ENCODE measurements at regions of chr2 and their contacts with region 1.

Region 1: DNA sequence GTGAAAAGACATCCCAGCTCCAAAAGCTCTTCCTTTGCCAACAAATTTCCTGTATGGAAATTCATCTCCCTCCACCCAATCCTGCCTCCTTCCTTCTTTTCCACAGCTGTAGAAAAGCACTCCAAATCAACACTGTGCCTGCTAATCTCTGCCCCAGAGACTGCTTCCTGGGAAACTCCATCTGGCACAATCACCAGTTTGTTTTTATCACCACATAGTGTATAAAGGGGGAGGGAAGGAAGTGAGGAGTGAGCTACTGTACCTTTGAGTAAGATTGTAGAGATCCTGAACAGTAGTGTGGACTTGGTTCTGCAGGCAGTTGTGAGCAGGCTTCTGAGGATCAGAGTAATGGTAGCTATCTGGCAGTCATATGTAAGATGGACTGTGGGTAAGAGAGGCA is 14.7 kb upstream of the FAM237A start:
- DNase-seq: no peak
- ATAC-seq: no peak
- H3K4me3 ChIP-seq: no peak overlapping the region
- H3K27ac ChIP-seq: no peak overlapping the region
- H3K4me1 ChIP-seq: no peaks in the 10 kb centered on the region
- H3K27me3 ChIP-seq: peaks cover 0 to 7% (median 5%) of the 10 kb centered on the region in 3 donors
- CTCF ChIP-seq: no peak

Region 2: DNA sequence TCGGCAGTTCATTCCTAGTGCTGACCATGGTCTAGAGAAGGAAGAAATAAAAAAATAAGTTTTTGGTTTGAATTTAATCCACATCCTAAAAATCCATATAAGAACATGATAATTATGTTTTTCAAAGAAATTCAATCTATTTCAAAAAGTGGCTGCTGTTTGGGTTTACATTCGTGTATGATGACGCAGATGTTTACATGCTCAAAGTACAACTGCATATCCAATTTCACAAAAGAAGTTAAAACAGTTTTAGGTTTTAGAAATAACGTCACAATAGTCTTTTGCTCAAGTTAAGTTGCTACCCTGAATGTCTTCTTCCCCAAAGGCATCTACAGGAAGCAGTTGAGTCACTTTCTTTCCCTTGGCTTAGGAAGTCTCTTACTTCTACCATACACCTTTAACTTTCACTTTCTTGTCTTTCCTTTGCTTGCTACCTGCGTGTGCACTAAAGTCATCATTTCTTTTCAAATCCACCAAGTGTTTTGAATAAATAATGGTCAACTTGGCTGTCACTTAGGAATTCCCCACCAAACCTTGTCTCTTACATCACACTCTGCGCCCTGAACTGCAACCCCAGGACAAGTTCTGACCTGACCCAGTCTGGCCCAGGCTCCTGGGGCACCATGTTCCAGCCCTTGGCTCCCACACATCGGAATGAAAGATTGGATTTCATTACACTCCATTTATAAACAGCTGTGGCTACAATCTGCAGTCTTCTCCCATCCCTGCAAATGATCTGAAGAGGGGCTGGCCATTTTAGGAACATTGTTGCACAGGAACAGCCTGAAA is 43.1 kb after region 1 on chr2:
- intact Hi-C with region 1: loop called in 1 of 2 experiments (anchors 1 kb)
- DNase-seq: no peak
- ATAC-seq: no peak
- H3K4me3 ChIP-seq: no peak overlapping the region
- H3K27ac ChIP-seq: no peak overlapping the region
- H3K4me1 ChIP-seq: no peaks in the 10 kb centered on the region
- H3K27me3 ChIP-seq: peaks cover 0 to 9% (median 3%) of the 10 kb centered on the region in 3 donors
- CTCF ChIP-seq: no peak